Activated CD4-positive, alpha-beta memory T cell treated with anti-CD3 and anti-CD28 coated beads for 36 hours (primary cell): ENCODE measurements at regions of chr5 and their contacts with region 1.

Region 1: DNA sequence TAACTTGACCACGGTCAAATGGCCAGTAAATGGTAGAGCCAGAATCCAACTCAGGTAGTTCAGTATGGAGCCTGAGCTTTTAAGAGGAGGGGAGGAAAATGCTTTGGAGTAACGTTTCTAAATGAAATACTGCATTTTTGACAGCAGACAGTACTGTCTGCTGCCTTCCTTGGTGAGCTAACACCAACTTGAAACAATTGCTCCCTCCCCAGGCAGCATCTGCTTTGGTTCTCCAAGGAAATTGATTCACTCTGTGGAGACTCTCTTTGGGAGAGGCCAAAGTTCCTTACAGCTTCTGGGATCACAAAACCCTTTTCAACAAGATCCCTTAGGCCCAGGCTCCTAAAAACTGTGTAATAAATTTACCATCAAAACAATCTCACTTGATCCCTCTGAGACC is 75.2 kb upstream of the SSBP2 start:
- DNase-seq: no peak
- H3K4me3 Mint-ChIP-seq: no peak overlapping the region
- H3K27ac Mint-ChIP-seq: no peak overlapping the region
- H3K4me1 Mint-ChIP-seq: no peaks in the 10 kb centered on the region
- H3K27me3 Mint-ChIP-seq: peaks cover 1% of the 10 kb centered on the region

Region 2: GRCh38 chr5:81838307-81838906 is 12.3 kb after region 1 on chr5:
- CTCF ChIA-PET with region 1: interaction called, 13 read pairs
- POLR2A ChIA-PET with region 1: no interaction called
- intact Hi-C with region 1: no loop called
- DNase-seq: peak; percentile 29
- H3K4me3 Mint-ChIP-seq: no peak overlapping the region
- H3K27ac Mint-ChIP-seq: no peak overlapping the region
- H3K4me1 Mint-ChIP-seq: peaks cover 5% of the 10 kb centered on the region
- H3K27me3 Mint-ChIP-seq: no peaks in the 10 kb centered on the region